Ovary (tissue), 10 donors: ENCODE measurements at regions of chr14 and their contacts with region 1.

Region 1: GRCh38 chr14:103518422-103519042 is 4.1 kb downstream of the CKB start:
- DNase-seq: peak; percentile 68 to 85 (median 80)
- H3K4me3 ChIP-seq: no peak overlapping the region
- H3K27ac ChIP-seq: peak overlapping the region; percentile 58 to 63
- H3K4me1 ChIP-seq: peaks cover 10% of the 10 kb centered on the region
- H3K27me3 ChIP-seq: no peaks in the 10 kb centered on the region
- CTCF ChIP-seq: peak; percentile 57 to 93 (median 85)
- EP300 ChIP-seq: no peak
- POLR2A ChIP-seq: peak; percentile 24

Region 2: GRCh38 chr14:103552011-103552845 is 33.7 kb after region 1 on chr14:
- intact Hi-C with region 1: loop called in 1 of 4 experiments (anchors 5 kb)
- DNase-seq: peak in 2 of 5 donors; percentile 9 to 35
- H3K4me3 ChIP-seq: no peak overlapping the region
- H3K27ac ChIP-seq: peak overlapping the region in 1 of 2 donors; percentile 45
- H3K4me1 ChIP-seq: peaks cover 1% of the 10 kb centered on the region
- H3K27me3 ChIP-seq: no peaks in the 10 kb centered on the region
- CTCF ChIP-seq: no peak
- EP300 ChIP-seq: no peak
- POLR2A ChIP-seq: no peak